Mammary epithelial cell (primary cell): ENCODE measurements at regions of chrX and their contacts with region 1.

Region 1: DNA sequence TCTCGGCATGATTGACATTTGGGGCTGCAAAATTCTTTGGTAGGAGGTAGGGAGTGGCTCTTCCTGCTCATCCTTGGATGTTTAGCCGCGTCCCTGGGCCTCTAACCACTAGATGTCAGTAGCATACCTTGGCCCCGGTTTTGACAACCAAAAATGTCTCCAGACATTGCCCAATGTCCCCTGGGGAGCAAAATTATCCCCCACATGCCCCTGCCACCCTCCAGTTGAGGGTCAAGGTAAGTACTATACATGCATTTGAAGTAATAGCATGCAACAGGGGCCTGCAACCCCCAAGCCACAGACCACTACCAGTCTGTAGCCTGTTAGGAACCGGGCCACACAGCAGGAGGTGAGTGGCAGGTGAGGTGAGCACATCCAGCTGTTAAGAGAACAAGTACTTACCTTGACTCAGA is 17.6 kb upstream of the KIAA1210 start:
- DNase-seq: peak; percentile 4
- H3K4me3 ChIP-seq: no peak overlapping the region
- H3K27ac ChIP-seq: no peak overlapping the region
- H3K4me1 ChIP-seq: no peaks in the 10 kb centered on the region
- H3K27me3 ChIP-seq: no peaks in the 10 kb centered on the region
- CTCF ChIP-seq: peak; percentile 28 to 66

Region 2: DNA sequence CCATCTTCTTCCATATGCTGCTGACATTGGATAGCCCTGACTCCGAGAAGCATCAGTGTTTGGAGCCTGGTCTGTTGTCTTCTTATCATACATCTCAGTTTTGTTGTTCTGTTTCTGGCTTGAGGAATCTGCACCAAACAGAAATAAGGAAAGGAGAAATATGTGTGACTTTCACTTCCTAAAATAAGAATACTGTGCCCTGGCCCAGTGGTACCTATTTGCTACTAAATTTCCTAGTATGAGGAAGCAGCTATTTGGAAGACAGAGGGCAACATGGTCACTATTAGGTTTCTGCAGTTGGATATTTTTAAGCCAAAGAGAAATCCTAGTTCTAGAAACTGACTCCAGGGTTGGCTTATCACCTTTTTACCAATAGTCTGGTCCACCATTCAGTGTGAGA is 55.6 kb before region 1 on chrX:
- CTCF ChIA-PET with region 1: no interaction called
- dilution Hi-C with region 1: loop called (anchors 5 kb)
- in situ Hi-C with region 1: no loop called
- intact Hi-C with region 1: no loop called
- DNase-seq: no peak
- H3K4me3 ChIP-seq: no peak overlapping the region
- H3K27ac ChIP-seq: no peak overlapping the region
- H3K4me1 ChIP-seq: no peaks in the 10 kb centered on the region
- H3K27me3 ChIP-seq: peaks cover 5% of the 10 kb centered on the region
- CTCF ChIP-seq: no peak

Region 3: DNA sequence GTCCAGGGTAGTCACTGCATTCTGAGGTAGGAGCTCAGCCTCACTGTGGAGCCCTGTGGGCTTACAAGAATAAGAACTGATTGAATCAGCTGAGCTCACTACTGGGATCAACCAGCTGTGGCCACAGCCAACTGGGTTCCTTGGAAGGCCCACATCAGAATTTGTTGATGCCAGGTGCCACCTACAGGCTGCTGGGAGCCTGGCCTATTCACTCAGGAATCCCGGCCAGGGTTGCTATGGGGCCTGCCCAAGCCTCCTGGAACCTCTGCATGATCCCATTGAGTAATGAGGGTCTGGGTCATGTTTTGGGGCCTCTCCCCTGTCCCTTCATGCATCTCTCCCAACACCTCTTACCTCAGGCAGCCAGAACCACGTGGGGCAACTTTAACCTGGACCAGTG is 36.2 kb after region 1 on chrX:
- CTCF ChIA-PET with region 1: no interaction called
- dilution Hi-C with region 1: no loop called
- in situ Hi-C with region 1: no loop called
- intact Hi-C with region 1: loop called (anchors 1 kb)
- DNase-seq: peak; percentile 9
- H3K4me3 ChIP-seq: no peak overlapping the region
- H3K27ac ChIP-seq: no peak overlapping the region
- H3K4me1 ChIP-seq: no peaks in the 10 kb centered on the region
- H3K27me3 ChIP-seq: no peaks in the 10 kb centered on the region
- CTCF ChIP-seq: peak; percentile 18 to 51

Region 4: GRCh38 chrX:119201570-119201969 is 56.3 kb after region 1 on chrX:
- CTCF ChIA-PET with region 1: no interaction called
- dilution Hi-C with region 1: no loop called
- in situ Hi-C with region 1: no loop called
- intact Hi-C with region 1: no loop called
- DNase-seq: no peak
- H3K4me3 ChIP-seq: no peak overlapping the region
- H3K27ac ChIP-seq: no peak overlapping the region
- H3K4me1 ChIP-seq: no peaks in the 10 kb centered on the region
- H3K27me3 ChIP-seq: no peaks in the 10 kb centered on the region
- CTCF ChIP-seq: no peak

Region 5: DNA sequence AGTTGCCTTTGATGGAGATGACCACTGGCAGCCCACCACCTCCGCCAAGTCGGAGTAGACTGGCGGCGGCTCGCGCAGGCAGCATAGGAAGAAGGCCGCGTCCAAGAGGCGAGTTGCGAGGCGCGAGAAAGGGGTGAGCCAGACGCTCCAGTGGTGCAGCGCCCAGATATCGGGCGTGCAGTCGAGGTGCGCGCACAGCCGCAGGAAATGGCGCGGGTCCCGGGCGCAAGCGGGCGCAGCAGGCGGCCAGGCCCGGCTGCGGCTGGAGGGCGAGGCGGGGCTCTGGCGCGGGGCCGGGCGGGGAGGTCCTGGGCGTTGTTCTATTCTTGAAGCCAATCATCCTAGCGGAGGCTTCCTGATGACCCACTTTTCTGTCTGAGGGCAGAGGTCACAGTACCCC is 77.7 kb after region 1 on chrX:
- CTCF ChIA-PET with region 1: no interaction called
- dilution Hi-C with region 1: no loop called
- in situ Hi-C with region 1: no loop called
- intact Hi-C with region 1: loop called (anchors 2 kb)
- DNase-seq: no peak
- H3K4me3 ChIP-seq: no peak overlapping the region
- H3K27ac ChIP-seq: no peak overlapping the region
- H3K4me1 ChIP-seq: no peaks in the 10 kb centered on the region
- H3K27me3 ChIP-seq: peaks cover 2% of the 10 kb centered on the region
- CTCF ChIP-seq: no peak

Region 6: GRCh38 chrX:119266364-119266995 is 121.2 kb after region 1 on chrX:
- CTCF ChIA-PET with region 1: no interaction called
- dilution Hi-C with region 1: no loop called
- in situ Hi-C with region 1: no loop called
- intact Hi-C with region 1: loop called (anchors 5 kb)
- DNase-seq: peak; percentile 6
- H3K4me3 ChIP-seq: no peak overlapping the region
- H3K27ac ChIP-seq: no peak overlapping the region
- H3K4me1 ChIP-seq: no peaks in the 10 kb centered on the region
- H3K27me3 ChIP-seq: no peaks in the 10 kb centered on the region
- CTCF ChIP-seq: peak; percentile 62 to 81